Naive thymus-derived CD4-positive, alpha-beta T cell (primary cell): ENCODE measurements at regions of chr15 and their contacts with region 1.

Region 1: DNA sequence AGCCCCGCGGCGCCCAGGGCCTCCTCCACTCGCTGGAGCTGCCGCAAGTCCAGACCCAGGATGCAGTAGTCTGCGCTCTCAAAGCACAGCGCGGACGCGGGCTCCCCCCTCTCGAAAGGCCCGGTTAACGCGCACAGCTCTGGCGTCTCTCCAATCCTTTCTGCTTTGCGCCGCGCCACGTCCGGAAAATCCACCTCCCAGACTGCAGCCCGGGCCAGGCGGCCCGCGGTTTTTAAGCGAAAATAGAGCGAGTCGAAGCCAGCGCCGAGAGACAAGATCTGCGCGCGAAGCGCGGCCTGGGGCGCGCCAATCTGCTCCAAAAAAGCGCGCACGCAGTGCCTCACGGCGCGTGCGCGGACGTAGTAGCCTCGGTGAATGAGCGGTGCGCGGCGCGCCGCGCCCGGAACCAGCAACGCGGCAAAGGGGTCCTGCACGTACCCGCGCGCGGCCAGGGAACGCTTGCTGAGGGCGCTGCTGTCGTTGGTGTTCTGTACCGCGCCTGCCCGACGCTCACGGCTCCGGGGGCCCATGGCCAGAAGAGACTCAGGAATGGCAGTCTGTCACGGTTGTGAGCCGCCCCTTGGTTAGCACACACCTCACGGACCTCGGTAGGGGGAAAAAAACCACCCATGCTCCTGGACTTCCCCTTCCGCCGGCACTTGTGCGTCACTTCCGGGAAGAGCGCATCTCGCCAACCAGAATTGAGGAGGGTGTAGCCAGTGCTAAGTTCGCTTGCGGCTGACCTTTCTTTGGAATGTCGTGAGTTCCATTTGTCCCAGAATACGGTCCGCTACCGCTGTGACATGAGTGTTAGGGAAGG is at the start of gene LCMT2:
- DNase-seq: peak; percentile 80 to 95 (median 92)
- ATAC-seq: peak; percentile 92
- H3K4me3 ChIP-seq: peak within 1 kb of the TSS; percentile 84
- H3K4me3 Mint-ChIP-seq: peak within 1 kb of the TSS; percentile 89 to 98 (median 96)
- H3K27ac ChIP-seq: peak within 1 kb of the TSS; percentile 88
- H3K27ac Mint-ChIP-seq: peak within 1 kb of the TSS; percentile 93 to 99 (median 99)
- H3K4me1 ChIP-seq: peaks cover 19 to 22% of the 10 kb centered on the region in 2 donors
- H3K4me1 Mint-ChIP-seq: peaks cover 19 to 54% (median 46%) of the 10 kb centered on the region in 7 donors
- H3K27me3 ChIP-seq: no peaks in the 10 kb centered on the region
- H3K27me3 Mint-ChIP-seq: peaks cover 0 to 4% (median 0%) of the 10 kb centered on the region in 5 donors
- total RNA-seq, gene LCMT2: 10.1 to 19.1 (median 15.0) TPM

Region 2: GRCh38 chr15:42736793-42737528 is 593.2 kb before region 1 on chr15 and contains the start of gene CDAN1:
- CTCF ChIA-PET with region 1: no interaction called
- POLR2A ChIA-PET with region 1: no interaction called
- intact Hi-C with region 1: loop called in 1 of 2 experiments (anchors 2 kb)
- DNase-seq: peak; percentile 80 to 95 (median 87)
- ATAC-seq: peak; percentile 97
- H3K4me3 ChIP-seq: peak within 1 kb of the TSS; percentile 65
- H3K4me3 Mint-ChIP-seq: peak within 1 kb of the TSS; percentile 79 to 90 (median 86)
- H3K27ac ChIP-seq: peak within 1 kb of the TSS; percentile 87
- H3K27ac Mint-ChIP-seq: peak within 1 kb of the TSS; percentile 78 to 91 (median 86)
- H3K4me1 ChIP-seq: peaks cover 5 to 6% of the 10 kb centered on the region in 2 donors
- H3K4me1 Mint-ChIP-seq: peaks cover 13 to 26% (median 20%) of the 10 kb centered on the region in 7 donors
- H3K27me3 ChIP-seq: no peaks in the 10 kb centered on the region
- H3K27me3 Mint-ChIP-seq: no peaks in the 10 kb centered on the region
- total RNA-seq, gene CDAN1: 25.8 to 38.0 (median 28.3) TPM

Region 3: DNA sequence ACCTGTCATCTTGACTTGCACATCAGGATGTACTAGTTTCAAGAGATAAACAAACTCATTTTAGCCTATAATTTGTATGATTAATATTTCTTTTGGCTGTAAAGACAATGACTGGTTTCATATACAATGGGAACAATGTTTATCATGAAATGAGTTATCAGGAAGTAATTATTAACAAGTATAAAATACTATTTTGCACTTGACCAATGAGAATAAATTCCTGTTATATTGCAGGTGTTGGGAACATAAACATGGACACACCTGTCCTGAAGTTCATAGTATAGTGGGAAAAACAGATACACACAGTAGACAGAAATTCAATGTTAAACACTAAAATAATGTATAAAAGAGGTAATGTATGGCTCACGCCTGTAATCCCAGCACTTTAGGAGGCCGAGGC is 281.2 kb before region 1 on chr15:
- CTCF ChIA-PET with region 1: no interaction called
- POLR2A ChIA-PET with region 1: no interaction called
- intact Hi-C with region 1: no loop called
- DNase-seq: no peak
- ATAC-seq: no peak
- H3K4me3 ChIP-seq: no peak overlapping the region
- H3K4me3 Mint-ChIP-seq: no peak overlapping the region
- H3K27ac ChIP-seq: no peak overlapping the region
- H3K27ac Mint-ChIP-seq: no peak overlapping the region
- H3K4me1 ChIP-seq: no peaks in the 10 kb centered on the region
- H3K4me1 Mint-ChIP-seq: peaks cover 0 to 5% (median 0%) of the 10 kb centered on the region in 7 donors
- H3K27me3 ChIP-seq: no peaks in the 10 kb centered on the region
- H3K27me3 Mint-ChIP-seq: no peaks in the 10 kb centered on the region

Region 4: GRCh38 chr15:43105778-43106485 is 224.2 kb before region 1 on chr15 and contains the start of gene UBR1:
- CTCF ChIA-PET with region 1: no interaction called
- POLR2A ChIA-PET with region 1: no interaction called
- intact Hi-C with region 1: loop called in 1 of 2 experiments (anchors 1 kb)
- DNase-seq: peak; percentile 65 to 91 (median 89)
- ATAC-seq: peak; percentile 94
- H3K4me3 ChIP-seq: peak within 1 kb of the TSS; percentile 86
- H3K4me3 Mint-ChIP-seq: peak within 1 kb of the TSS; percentile 86 to 99 (median 95)
- H3K27ac ChIP-seq: peak within 1 kb of the TSS; percentile 99
- H3K27ac Mint-ChIP-seq: peak within 1 kb of the TSS; percentile 97 to 99 (median 98)
- H3K4me1 ChIP-seq: peaks cover 21 to 24% of the 10 kb centered on the region in 2 donors
- H3K4me1 Mint-ChIP-seq: peaks cover 40 to 56% (median 52%) of the 10 kb centered on the region in 7 donors
- H3K27me3 ChIP-seq: no peaks in the 10 kb centered on the region
- H3K27me3 Mint-ChIP-seq: peaks cover 0 to 5% (median 0%) of the 10 kb centered on the region in 5 donors
- total RNA-seq, gene UBR1: 38.4 to 51.7 (median 48.0) TPM

Region 5: GRCh38 chr15:43208052-43209002 is 121.8 kb before region 1 on chr15:
- CTCF ChIA-PET with region 1: no interaction called
- POLR2A ChIA-PET with region 1: no interaction called
- intact Hi-C with region 1: no loop called
- DNase-seq: no peak
- ATAC-seq: no peak
- H3K4me3 ChIP-seq: no peak overlapping the region
- H3K4me3 Mint-ChIP-seq: no peak overlapping the region
- H3K27ac ChIP-seq: no peak overlapping the region
- H3K27ac Mint-ChIP-seq: peak overlapping the region in 1 of 9 donors; percentile 38
- H3K4me1 ChIP-seq: no peaks in the 10 kb centered on the region
- H3K4me1 Mint-ChIP-seq: peaks cover 0 to 8% (median 4%) of the 10 kb centered on the region in 7 donors
- H3K27me3 ChIP-seq: no peaks in the 10 kb centered on the region
- H3K27me3 Mint-ChIP-seq: peaks cover 11 to 33% (median 23%) of the 10 kb centered on the region in 5 donors

Region 6: GRCh38 chr15:43218908-43219706 is 111.1 kb before region 1 on chr15:
- CTCF ChIA-PET with region 1: no interaction called
- POLR2A ChIA-PET with region 1: no interaction called
- intact Hi-C with region 1: no loop called
- DNase-seq: no peak
- ATAC-seq: no peak
- H3K4me3 ChIP-seq: no peak overlapping the region
- H3K4me3 Mint-ChIP-seq: no peak overlapping the region
- H3K27ac ChIP-seq: no peak overlapping the region
- H3K27ac Mint-ChIP-seq: no peak overlapping the region
- H3K4me1 ChIP-seq: no peaks in the 10 kb centered on the region
- H3K4me1 Mint-ChIP-seq: peaks cover 0 to 5% (median 0%) of the 10 kb centered on the region in 7 donors
- H3K27me3 ChIP-seq: no peaks in the 10 kb centered on the region
- H3K27me3 Mint-ChIP-seq: peaks cover 0 to 23% (median 7%) of the 10 kb centered on the region in 5 donors

Region 7: DNA sequence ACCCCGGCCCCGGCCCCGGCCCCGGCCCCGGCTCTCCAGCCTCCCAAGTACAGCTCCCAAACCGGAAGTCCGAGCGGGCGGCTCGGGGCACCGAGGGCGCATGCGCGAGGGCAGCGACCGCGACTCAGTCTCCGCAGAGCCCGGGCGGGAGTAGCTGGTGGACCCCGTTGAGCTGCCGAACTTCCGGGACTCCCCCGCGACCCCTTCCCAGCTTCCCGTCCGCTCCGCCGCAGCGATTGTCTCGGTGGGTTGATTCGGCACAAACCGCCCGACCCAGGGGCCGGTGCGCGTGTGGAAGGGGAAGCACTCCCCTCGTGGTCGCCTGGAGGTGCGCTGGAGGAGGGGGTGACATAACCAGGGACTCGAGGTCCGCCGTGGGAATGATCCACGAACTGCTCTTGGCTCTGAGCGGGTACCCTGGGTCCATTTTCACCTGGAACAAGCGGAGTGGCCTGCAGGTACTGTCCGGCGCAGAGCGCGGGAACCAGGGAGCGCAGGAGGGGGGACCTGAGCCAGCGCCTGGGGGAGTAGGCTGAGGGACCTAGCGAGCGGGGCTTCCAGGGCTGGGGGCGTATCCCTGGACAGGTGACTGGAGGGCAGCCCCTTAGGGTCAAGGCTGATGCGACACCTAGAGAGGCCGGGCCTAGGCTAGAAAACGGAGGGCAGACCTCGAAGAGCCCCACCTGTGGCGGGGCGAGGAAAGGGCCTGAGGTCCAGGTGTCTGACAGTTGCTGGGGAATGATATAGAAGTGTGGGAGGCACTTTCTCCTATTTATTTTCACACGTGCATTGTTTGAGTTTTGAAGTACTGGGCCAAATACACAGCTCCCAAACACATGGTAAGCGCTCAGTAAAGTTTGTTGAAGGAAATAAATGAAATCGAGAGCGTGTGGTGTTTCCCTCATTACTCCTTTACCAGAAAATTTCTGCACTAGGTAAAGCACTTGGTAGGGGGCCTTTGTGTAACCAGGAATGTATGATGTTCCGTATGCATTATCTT is 41.1 kb after region 1 on chr15 and contains the starts of genes TUBGCP4 and ZSCAN29:
- CTCF ChIA-PET with region 1: no interaction called
- POLR2A ChIA-PET with region 1: interaction called, 3 read pairs
- intact Hi-C with region 1: loop called (anchors 1 kb)
- DNase-seq: peak; percentile 52 to 89 (median 62)
- ATAC-seq: peak; percentile 81
- H3K4me3 ChIP-seq: peak within 1 kb of the TSS; percentile 84
- H3K4me3 Mint-ChIP-seq: peak within 1 kb of the TSS; percentile 90 to 96 (median 93)
- H3K27ac ChIP-seq: peak within 1 kb of the TSS; percentile 60
- H3K27ac Mint-ChIP-seq: peak within 1 kb of the TSS; percentile 80 to 92 (median 88)
- H3K4me1 ChIP-seq: peaks cover 22 to 23% of the 10 kb centered on the region in 2 donors
- H3K4me1 Mint-ChIP-seq: peaks cover 39 to 69% (median 56%) of the 10 kb centered on the region in 7 donors
- H3K27me3 ChIP-seq: no peaks in the 10 kb centered on the region
- H3K27me3 Mint-ChIP-seq: no peaks in the 10 kb centered on the region
- total RNA-seq, gene TUBGCP4: 10.9 to 34.7 (median 17.7) TPM
- total RNA-seq, gene ZSCAN29: 12.9 to 36.9 (median 33.6) TPM

Region 8: DNA sequence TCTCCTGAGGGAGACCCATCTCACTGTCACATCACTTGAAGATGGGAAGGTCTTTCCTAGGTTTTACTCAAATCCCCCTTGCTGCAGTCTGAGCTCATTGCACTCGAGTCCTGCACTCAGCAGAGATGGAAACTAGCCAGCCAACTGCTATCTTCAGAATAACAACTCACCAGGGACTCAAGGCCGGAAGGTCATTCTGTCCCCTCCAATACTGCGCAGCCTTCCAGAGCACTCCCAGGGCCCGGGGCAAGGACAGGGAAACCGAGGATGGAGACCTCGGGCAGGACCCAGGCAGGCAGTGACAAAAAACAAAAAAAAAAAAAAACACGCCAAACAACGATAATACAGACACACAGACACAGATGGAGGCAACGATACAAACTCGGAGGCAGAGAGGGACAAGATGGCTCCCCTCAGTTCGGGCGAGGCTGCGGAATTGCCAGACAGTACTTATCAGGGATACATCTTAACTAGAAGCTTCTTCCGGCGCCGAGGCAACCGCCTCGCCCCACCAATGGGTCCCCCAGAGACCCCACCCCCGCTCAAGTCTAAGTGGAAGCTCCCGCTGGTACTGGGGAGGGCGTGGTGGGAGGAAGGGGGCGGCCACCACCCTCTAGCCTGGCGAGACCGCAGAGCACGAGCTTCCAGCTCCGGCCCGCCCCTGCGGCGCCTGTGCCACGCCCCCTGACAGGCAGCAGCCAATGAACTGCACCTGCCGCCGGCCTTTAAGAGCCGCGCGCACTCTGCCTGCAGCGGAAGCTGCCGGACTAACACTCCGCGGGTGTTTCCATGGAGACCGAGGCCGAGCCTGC is 180.2 kb after region 1 on chr15:
- CTCF ChIA-PET with region 1: no interaction called
- POLR2A ChIA-PET with region 1: interaction called, 4 read pairs
- intact Hi-C with region 1: loop called (anchors 1 to 5 kb)
- DNase-seq: peak; percentile 91 to 96 (median 94)
- ATAC-seq: peak; percentile 97
- H3K4me3 ChIP-seq: peak overlapping the region; percentile 88
- H3K4me3 Mint-ChIP-seq: peak overlapping the region; percentile 89 to 100 (median 94)
- H3K27ac ChIP-seq: peak overlapping the region; percentile 76
- H3K27ac Mint-ChIP-seq: peak overlapping the region; percentile 92 to 99 (median 97)
- H3K4me1 ChIP-seq: peaks cover 14 to 17% of the 10 kb centered on the region in 2 donors
- H3K4me1 Mint-ChIP-seq: peaks cover 14 to 51% (median 28%) of the 10 kb centered on the region in 7 donors
- H3K27me3 ChIP-seq: no peaks in the 10 kb centered on the region
- H3K27me3 Mint-ChIP-seq: peaks cover 0 to 2% (median under 1%) of the 10 kb centered on the region in 5 donors

Region 9: DNA sequence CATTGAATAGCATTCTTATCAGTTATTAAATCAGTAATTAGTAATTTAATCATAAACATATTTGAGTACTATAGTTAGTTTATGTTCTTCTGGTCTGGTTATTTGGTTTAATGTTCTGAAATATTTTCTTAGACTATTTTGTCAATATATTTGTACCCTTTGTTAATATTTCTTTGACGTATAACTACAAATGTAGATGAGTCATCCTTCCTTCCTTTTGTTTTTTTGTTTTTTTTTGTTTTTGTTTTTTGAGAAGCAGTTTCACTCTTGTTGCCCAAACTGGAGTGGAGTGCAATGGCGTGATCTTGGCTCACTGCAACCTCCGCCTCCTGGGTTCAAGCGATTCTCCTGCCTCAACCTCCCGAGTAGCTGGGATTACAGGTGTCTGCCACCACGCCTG is 1189.4 kb after region 1 on chr15:
- CTCF ChIA-PET with region 1: no interaction called
- POLR2A ChIA-PET with region 1: no interaction called
- intact Hi-C with region 1: loop called in 1 of 2 experiments (anchors 5 kb)
- DNase-seq: no peak
- ATAC-seq: no peak
- H3K4me3 ChIP-seq: no peak overlapping the region
- H3K4me3 Mint-ChIP-seq: no peak overlapping the region
- H3K27ac ChIP-seq: no peak overlapping the region
- H3K27ac Mint-ChIP-seq: peak overlapping the region in 2 of 9 donors; percentile 44 to 73
- H3K4me1 ChIP-seq: no peaks in the 10 kb centered on the region
- H3K4me1 Mint-ChIP-seq: peaks cover 0 to 6% (median 0%) of the 10 kb centered on the region in 7 donors
- H3K27me3 ChIP-seq: no peaks in the 10 kb centered on the region
- H3K27me3 Mint-ChIP-seq: no peaks in the 10 kb centered on the region